ENCODE measurements at regions of chr17 and their contacts with region 1.

Region 1: DNA sequence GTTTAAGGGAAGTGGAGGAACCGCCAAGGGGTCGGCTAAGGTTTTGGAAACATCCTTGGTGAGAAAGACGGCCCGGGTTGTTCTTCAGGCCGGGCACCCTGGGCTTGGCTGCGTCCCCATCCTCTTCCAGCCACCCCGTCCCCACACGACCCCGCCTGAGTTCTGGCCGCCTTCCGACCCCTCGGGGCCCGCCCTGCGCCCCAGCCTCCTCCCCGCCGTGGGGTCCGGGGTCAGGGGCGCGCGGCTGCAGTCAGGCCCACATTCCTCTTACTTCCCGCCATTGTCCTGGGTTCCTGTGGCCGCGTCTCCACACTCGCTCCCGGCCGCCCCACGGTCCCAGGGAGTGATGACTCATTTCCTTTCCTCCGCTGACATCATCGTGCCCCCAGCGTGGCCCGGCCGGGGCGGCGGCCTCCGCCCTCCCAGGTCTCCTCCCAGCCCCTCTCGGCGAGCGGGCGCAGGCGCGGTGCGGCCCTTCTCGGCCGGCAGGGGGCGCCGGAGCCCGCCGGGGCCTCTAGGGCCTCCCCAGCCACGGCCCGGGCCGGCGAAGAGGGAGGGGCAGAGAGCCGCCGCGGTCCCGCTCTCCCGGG is 59.6 kb downstream of the WSB1 start:
- DNase-seq: peak; percentile 96 to 97
- ATAC-seq: peak; percentile 85 to 93
- H3K4me3 ChIP-seq: peak overlapping the region; percentile 59
- H3K27ac ChIP-seq: peak overlapping the region; percentile 90 to 99
- H3K4me1 ChIP-seq: peaks cover 25% of the 10 kb centered on the region
- CTCF ChIP-seq: peak; percentile 99
- EP300 ChIP-seq: peak; percentile 49 to 64; a peak in 2 of 5 replicates
- POLR2A ChIP-seq: peak; percentile 81
- RAD21 ChIP-seq: peak; percentile 67 to 99

Region 2: DNA sequence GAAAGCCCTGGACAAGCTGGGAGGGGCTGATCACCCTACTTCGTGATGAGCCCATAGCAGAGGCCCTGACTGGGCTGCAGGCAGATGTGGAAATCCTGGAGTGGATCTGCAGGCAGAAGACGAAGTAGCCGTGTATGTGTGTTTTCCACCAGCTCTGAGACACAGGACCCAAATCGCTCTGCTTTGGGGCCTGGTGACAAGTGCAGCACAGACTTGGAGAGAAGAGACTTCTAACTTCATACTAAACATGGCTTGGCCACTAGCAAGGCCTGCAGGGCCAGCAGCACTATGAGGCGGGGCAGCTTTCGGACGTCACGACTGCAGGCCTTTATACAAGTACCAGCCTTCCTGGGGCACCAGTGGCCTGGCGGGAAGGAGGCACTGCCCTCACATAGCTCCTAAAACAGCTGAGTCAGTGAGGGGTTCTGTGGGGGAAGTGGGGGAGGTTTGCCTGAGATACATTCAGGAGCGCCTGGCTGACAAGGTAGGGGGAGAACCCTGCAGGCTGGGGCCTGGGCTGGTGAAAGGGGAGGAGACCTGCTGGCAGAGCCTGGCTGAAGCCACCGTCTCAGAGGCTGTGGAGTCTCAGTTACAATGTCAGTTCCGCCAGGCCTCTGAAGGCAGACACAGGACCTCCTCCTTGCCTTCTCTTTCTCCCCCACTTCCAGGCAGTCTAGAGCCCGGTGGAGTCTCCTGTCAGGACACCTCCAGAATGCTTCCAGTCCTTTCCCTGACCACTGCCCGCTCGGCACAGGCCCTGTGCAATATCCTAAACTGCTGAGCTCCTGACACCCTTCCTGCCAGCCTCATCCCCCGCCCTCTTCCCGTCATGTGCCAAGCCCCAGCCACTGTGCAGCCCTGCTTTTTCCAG is 13.8 kb after region 1 on chr17:
- CTCF ChIA-PET with region 1: interaction called, 22 read pairs
- POLR2A ChIA-PET with region 1: no interaction called
- DNase-seq: no peak
- ATAC-seq: peak in 1 of 2 experiments; percentile 19; a peak in 1 of 6 replicates
- H3K4me3 ChIP-seq: no peak overlapping the region
- H3K27ac ChIP-seq: peak overlapping the region in 1 of 2 experiments; percentile 33; a peak in 1 of 6 replicates
- H3K4me1 ChIP-seq: peaks cover 11% of the 10 kb centered on the region; the same call in 2 of the 3 replicates
- CTCF ChIP-seq: no peak
- EP300 ChIP-seq: no peak
- POLR2A ChIP-seq: no peak
- RAD21 ChIP-seq: no peak

Region 3: GRCh38 chr17:27407916-27408846 is 54.6 kb after region 1 on chr17:
- CTCF ChIA-PET with region 1: interaction called, 14 read pairs
- POLR2A ChIA-PET with region 1: interaction called, 3 read pairs
- DNase-seq: peak; percentile 33 to 62
- ATAC-seq: peak; percentile 69 to 88
- H3K4me3 ChIP-seq: no peak overlapping the region
- H3K27ac ChIP-seq: peak overlapping the region; percentile 56 to 59
- H3K4me1 ChIP-seq: peaks cover 32% of the 10 kb centered on the region
- CTCF ChIP-seq: no peak; the same call in 2 of the 3 replicates
- EP300 ChIP-seq: no peak
- POLR2A ChIP-seq: no peak
- RAD21 ChIP-seq: no peak; a peak in 1 of 5 replicates

Measured in A549 (cell line).